PC-9 (cell line): ENCODE measurements at regions of chr3 and their contacts with region 1.

Region 1: DNA sequence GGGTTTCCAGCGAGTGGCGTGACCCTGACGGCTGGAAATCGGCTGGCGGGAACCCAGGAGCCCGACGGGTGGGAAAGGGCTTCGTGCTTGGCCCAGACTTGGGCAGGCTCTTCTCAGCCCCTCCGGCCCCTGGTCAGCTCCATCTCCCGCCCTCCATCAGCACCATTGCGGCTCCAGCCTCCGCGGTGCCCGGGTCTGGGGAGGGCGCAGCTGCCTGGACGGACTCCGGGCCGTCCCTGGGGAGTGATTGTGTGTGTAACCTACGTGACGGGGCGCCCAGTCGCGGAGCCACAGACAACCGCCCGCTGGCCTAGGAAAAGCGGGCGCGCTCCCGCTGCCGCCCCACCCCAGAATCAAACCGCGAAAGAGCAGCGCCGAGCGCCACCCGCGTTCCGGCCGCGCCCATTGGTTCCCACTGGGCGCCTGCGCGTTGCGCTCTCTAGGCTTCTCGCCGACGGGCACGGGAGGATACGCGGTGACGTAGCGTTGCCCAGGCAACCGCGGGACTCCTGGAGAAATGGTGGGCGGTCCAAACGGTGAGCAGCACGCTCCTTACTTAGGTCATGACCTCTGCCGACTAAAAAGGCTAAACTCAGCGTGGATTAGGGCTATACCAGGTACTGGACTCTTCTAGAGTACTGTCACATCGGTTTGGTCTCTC is at the start of gene CFAP20DC:
- DNase-seq: peak; percentile 81 to 92
- H3K4me3 ChIP-seq: peak within 1 kb of the TSS; percentile 74
- H3K27ac ChIP-seq: peak within 1 kb of the TSS; percentile 32
- H3K4me1 ChIP-seq: peaks cover 31% of the 10 kb centered on the region
- H3K27me3 ChIP-seq: no peaks in the 10 kb centered on the region
- CTCF ChIP-seq: no peak
- total RNA-seq, gene CFAP20DC: 6.7 and 7.1 TPM in 2 replicates

Region 2: GRCh38 chr3:58640700-58641372 is 409.0 kb before region 1 on chr3:
- CTCF ChIA-PET with region 1: no interaction called
- POLR2A ChIA-PET with region 1: no interaction called
- intact Hi-C with region 1: loop called (anchors 5 kb)
- DNase-seq: peak; percentile 69 to 81
- H3K4me3 ChIP-seq: no peak overlapping the region
- H3K27ac ChIP-seq: no peak overlapping the region
- H3K4me1 ChIP-seq: no peaks in the 10 kb centered on the region
- H3K27me3 ChIP-seq: no peaks in the 10 kb centered on the region
- CTCF ChIP-seq: peak; percentile 88

Region 3: GRCh38 chr3:58824285-58824684 is 225.5 kb before region 1 on chr3:
- CTCF ChIA-PET with region 1: no interaction called
- POLR2A ChIA-PET with region 1: no interaction called
- intact Hi-C with region 1: loop called (anchors 10 kb)
- DNase-seq: peak in 1 of 2 experiments; percentile 37
- H3K4me3 ChIP-seq: no peak overlapping the region
- H3K27ac ChIP-seq: no peak overlapping the region
- H3K4me1 ChIP-seq: no peaks in the 10 kb centered on the region
- H3K27me3 ChIP-seq: no peaks in the 10 kb centered on the region
- CTCF ChIP-seq: peak; percentile 70

Region 4: GRCh38 chr3:58994746-58995330 is 55.0 kb before region 1 on chr3:
- CTCF ChIA-PET with region 1: interaction called, 3 read pairs
- POLR2A ChIA-PET with region 1: interaction called, 4 read pairs
- intact Hi-C with region 1: loop called (anchors 2 kb)
- DNase-seq: peak in 1 of 2 experiments; percentile 35
- H3K4me3 ChIP-seq: no peak overlapping the region
- H3K27ac ChIP-seq: no peak overlapping the region
- H3K4me1 ChIP-seq: peaks cover 16% of the 10 kb centered on the region
- H3K27me3 ChIP-seq: no peaks in the 10 kb centered on the region
- CTCF ChIP-seq: peak; percentile 78

Region 5: GRCh38 chr3:59027607-59028006 is 22.2 kb before region 1 on chr3:
- CTCF ChIA-PET with region 1: no interaction called
- POLR2A ChIA-PET with region 1: no interaction called
- intact Hi-C with region 1: no loop called
- DNase-seq: no peak
- H3K4me3 ChIP-seq: no peak overlapping the region
- H3K27ac ChIP-seq: no peak overlapping the region
- H3K4me1 ChIP-seq: no peaks in the 10 kb centered on the region
- H3K27me3 ChIP-seq: no peaks in the 10 kb centered on the region
- CTCF ChIP-seq: no peak

Region 6: GRCh38 chr3:59245859-59246501 is 196.2 kb after region 1 on chr3:
- CTCF ChIA-PET with region 1: no interaction called
- POLR2A ChIA-PET with region 1: interaction called, 10 read pairs
- intact Hi-C with region 1: no loop called
- DNase-seq: no peak
- H3K4me3 ChIP-seq: no peak overlapping the region
- H3K27ac ChIP-seq: no peak overlapping the region
- H3K4me1 ChIP-seq: no peaks in the 10 kb centered on the region
- H3K27me3 ChIP-seq: no peaks in the 10 kb centered on the region
- CTCF ChIP-seq: no peak

Region 7: DNA sequence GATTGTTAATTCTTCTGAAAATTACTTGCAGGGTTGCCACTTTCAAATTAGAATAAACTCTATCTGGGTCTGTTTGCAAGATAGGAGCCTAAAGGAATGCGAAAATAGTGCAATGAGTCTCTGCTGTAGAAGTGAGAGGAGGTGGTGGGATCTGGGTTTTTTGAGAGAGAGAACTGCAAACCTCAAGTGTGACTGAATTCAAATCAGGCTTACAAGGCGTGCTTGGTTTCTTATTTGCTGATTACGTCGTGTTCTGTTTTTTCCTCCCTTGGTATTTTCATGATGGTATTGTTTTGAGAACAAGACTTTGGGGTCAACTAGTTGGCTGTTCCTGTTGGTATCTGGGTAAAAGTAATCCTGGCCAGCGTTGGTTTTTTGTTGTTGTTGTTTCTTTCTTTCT is 490.9 kb after region 1 on chr3:
- CTCF ChIA-PET with region 1: no interaction called
- POLR2A ChIA-PET with region 1: no interaction called
- intact Hi-C with region 1: no loop called
- DNase-seq: no peak
- H3K4me3 ChIP-seq: no peak overlapping the region
- H3K27ac ChIP-seq: no peak overlapping the region
- H3K4me1 ChIP-seq: no peaks in the 10 kb centered on the region
- H3K27me3 ChIP-seq: no peaks in the 10 kb centered on the region
- CTCF ChIP-seq: no peak

Region 8: GRCh38 chr3:59749291-59749690 is 699.5 kb after region 1 on chr3:
- CTCF ChIA-PET with region 1: interaction called, 10 read pairs
- POLR2A ChIA-PET with region 1: no interaction called
- intact Hi-C with region 1: no loop called
- DNase-seq: no peak
- H3K4me3 ChIP-seq: no peak overlapping the region
- H3K27ac ChIP-seq: no peak overlapping the region
- H3K4me1 ChIP-seq: no peaks in the 10 kb centered on the region
- H3K27me3 ChIP-seq: no peaks in the 10 kb centered on the region
- CTCF ChIP-seq: no peak